Panc1 (cell line): ENCODE measurements at regions of chr1 and their contacts with region 1.

Region 1: GRCh38 chr1:153954826-153955225 is 3.6 kb downstream of the CRTC2 start:
- DNase-seq: no peak
- ATAC-seq: no peak
- H3K4me3 ChIP-seq: no peak overlapping the region
- H3K27ac ChIP-seq: no peak overlapping the region
- H3K4me1 ChIP-seq: peaks cover 16% of the 10 kb centered on the region
- H3K27me3 ChIP-seq: no peaks in the 10 kb centered on the region
- CTCF ChIP-seq: no peak

Region 2: GRCh38 chr1:153984123-153984894 is 29.5 kb after region 1 on chr1:
- CTCF ChIA-PET with region 1: no interaction called
- POLR2A ChIA-PET with region 1: interaction called, 19 read pairs
- in situ Hi-C with region 1: no loop called
- intact Hi-C with region 1: no loop called
- DNase-seq: no peak
- ATAC-seq: no peak
- H3K4me3 ChIP-seq: no peak overlapping the region
- H3K27ac ChIP-seq: no peak overlapping the region
- H3K4me1 ChIP-seq: peaks cover 8% of the 10 kb centered on the region
- H3K27me3 ChIP-seq: no peaks in the 10 kb centered on the region
- CTCF ChIP-seq: no peak

Region 3: DNA sequence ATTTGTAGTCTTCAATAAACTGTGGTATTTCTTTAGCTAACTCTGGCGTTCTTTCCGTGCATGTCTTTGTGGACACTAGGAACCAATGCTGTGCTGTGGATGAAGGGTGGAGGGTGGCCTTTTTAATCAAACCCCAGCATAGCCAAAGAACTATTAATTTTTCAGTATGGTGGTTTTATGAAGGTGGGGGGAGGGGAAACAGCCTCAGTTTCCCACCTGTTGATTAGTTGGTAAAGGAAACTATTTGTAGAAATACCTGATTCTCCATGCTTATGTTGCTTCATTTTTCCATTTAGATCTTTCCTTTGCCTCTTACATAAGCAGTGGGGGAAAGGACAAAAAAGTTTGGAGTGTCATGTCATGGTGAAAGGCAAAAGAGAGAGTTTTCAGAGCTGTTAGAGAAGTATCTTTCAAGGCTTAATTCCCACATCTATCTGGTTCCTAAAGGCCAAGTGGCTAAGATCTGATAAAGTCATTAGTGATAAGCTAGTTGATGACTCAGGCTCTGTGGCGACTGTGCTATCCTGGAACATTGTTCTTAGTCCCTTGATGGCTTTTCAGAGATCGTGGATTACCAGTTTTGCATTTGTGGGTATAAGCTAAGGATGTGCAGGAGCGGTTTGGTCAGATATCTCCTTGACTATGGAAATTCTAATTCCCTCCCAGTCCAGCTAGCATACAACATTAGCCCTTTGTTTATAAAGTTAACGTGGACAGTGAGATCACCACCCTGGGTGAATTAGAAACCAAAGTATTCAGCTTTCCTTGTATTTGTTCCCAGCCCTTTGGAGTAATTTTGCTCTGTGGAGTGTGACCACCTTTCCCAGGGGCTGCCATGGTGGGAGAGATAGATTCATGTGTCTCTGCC is 308.9 kb after region 1 on chr1:
- CTCF ChIA-PET with region 1: no interaction called
- POLR2A ChIA-PET with region 1: no interaction called
- in situ Hi-C with region 1: no loop called
- intact Hi-C with region 1: no loop called
- DNase-seq: no peak
- ATAC-seq: no peak
- H3K4me3 ChIP-seq: no peak overlapping the region
- H3K27ac ChIP-seq: no peak overlapping the region
- H3K4me1 ChIP-seq: no peaks in the 10 kb centered on the region
- H3K27me3 ChIP-seq: no peaks in the 10 kb centered on the region
- CTCF ChIP-seq: no peak